Breast epithelium (tissue), 4 donors: ENCODE measurements at regions of chr4 and their contacts with region 1.

Region 1: GRCh38 chr4:173415885-173416653 is 17.2 kb upstream of the SCRG1 start:
- DNase-seq: peak in 1 of 2 donors; percentile 40
- H3K4me3 ChIP-seq: peak overlapping the region in 1 of 3 donors; percentile 30
- H3K27ac ChIP-seq: peak overlapping the region; percentile 29 to 81
- H3K4me1 ChIP-seq: no peaks in the 10 kb centered on the region
- H3K27me3 ChIP-seq: no peaks in the 10 kb centered on the region
- CTCF ChIP-seq: peak in 1 of 3 donors; percentile 50
- POLR2A ChIP-seq: no peak

Region 2: GRCh38 chr4:173319696-173320095 is 96.4 kb before region 1 on chr4:
- intact Hi-C with region 1: loop called (anchors 1 kb)
- DNase-seq: no peak
- H3K4me3 ChIP-seq: no peak overlapping the region
- H3K27ac ChIP-seq: no peak overlapping the region
- H3K4me1 ChIP-seq: no peaks in the 10 kb centered on the region
- H3K27me3 ChIP-seq: no peaks in the 10 kb centered on the region
- CTCF ChIP-seq: no peak
- POLR2A ChIP-seq: no peak